ENCODE measurements at regions of chr7 and their contacts with region 1.

Region 1: DNA sequence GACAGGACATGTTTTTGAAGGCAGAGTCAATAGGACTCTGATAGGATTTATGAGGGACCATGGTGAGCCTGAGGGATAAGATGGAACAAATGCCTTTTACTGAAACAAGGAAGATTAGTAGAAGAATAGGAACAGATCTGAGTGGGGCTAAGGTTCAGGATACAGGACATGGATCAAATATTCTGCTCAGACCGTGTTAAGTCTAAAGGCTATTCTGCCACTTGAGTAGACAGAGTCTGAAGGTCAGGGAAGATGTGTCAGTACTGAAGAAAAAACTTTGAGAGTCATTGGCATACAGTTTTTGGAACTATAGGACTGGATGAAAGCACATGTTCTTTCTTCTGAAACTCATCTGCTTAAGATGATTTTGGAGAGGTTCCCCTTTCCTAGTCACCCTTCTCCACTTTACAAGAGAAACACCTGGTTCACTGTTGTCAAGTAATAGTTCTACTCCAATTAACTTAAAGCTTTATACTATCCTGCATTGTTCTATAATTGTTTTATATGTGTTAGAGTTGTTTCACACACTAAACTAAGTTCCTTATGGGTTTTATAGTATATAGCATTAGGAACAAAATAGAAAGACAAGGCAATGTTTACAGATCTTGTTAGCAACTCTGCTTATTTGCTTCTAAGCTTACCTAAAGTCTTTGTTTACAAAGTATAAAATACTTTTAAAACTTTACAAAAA is 43.4 kb downstream of the WASL start:
- DNase-seq: no peak
- CTCF ChIP-seq: no peak

Region 2: GRCh38 chr7:123372368-123372767 is 333.0 kb before region 1 on chr7:
- CTCF ChIA-PET with region 1: no interaction called
- POLR2A ChIA-PET with region 1: no interaction called
- DNase-seq: no peak
- CTCF ChIP-seq: no peak

Region 3: DNA sequence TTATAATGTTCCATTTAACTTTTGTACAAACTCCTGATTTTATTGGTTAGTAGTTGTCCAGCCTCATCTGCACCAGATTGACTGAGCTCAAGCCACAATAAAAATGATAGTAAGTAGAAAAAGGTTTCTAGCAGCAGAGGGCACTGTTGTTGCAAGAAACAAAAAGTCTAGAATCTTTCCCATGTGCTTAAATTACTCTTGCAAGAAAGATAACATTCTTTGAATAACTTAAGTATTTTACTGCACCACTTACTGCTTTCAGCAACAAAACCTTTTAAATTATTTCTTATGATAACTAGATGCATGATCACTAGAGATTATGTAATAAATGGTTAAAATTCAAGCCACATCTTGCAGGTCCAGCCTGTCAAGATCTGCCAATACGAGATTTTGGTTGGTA is 22.7 kb before region 1 on chr7:
- CTCF ChIA-PET with region 1: interaction called, 33 read pairs
- POLR2A ChIA-PET with region 1: no interaction called
- DNase-seq: no peak
- CTCF ChIP-seq: peak; percentile 41

Region 4: GRCh38 chr7:123692471-123692877 is 12.9 kb before region 1 on chr7:
- CTCF ChIA-PET with region 1: interaction called, 33 read pairs
- POLR2A ChIA-PET with region 1: no interaction called
- DNase-seq: no peak
- CTCF ChIP-seq: no peak

Region 5: DNA sequence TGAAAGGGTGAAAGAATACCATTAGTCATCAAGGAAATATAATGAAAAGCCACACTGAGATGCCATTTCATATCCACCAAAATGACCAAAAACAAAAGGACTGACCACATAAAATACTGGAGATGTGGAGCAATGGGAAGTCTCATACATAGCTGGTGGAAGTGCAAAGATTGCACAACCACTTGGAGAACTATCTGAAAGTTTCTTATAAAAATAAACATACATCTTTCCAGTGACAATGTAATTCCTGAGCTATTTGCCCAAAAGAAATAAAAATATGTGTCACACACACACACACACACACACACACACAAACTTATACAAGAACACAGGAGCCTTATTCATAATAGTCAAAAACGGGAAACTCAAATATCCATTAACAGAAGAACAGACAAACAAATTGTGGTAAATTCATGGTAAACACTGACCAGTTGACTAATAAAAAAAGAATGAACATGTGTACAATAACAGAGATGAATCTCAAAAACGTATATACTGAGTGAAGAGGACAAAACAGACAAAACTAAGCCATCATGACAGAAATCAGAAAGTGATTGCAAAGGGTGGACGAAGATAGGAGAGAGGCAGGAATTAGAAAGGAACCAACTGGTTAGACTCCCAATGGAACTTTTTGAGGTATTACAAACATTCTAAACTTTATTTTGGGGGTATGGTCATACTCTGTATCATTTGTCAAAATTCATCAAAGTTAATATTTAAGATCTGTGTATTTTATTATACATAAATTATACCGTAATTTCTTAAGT is 21.9 kb after region 1 on chr7:
- CTCF ChIA-PET with region 1: interaction called, 10 read pairs
- POLR2A ChIA-PET with region 1: no interaction called
- DNase-seq: no peak
- CTCF ChIP-seq: no peak

Measured in GM10248 (cell line).